ENCODE measurements at regions of chr11 and their contacts with region 1.

Region 1: GRCh38 chr11:47152953-47153950 is 23.4 kb downstream of the ARFGAP2 start:
- DNase-seq: peak; percentile 89
- H3K4me3 ChIP-seq: no peak overlapping the region
- H3K27ac ChIP-seq: no peak overlapping the region
- H3K4me1 ChIP-seq: peaks cover 0 to 29% (median 26%) of the 10 kb centered on the region in 4 donors
- H3K27me3 ChIP-seq: no peaks in the 10 kb centered on the region
- CTCF ChIP-seq: peak; percentile 92 to 98 (median 96)
- EP300 ChIP-seq: no peak
- POLR2A ChIP-seq: no peak

Region 2: GRCh38 chr11:46529095-46529905 is 624.0 kb before region 1 on chr11:
- intact Hi-C with region 1: no loop called
- DNase-seq: peak; percentile 77
- H3K4me3 ChIP-seq: no peak overlapping the region
- H3K27ac ChIP-seq: no peak overlapping the region
- H3K4me1 ChIP-seq: peaks cover 0 to 10% (median 7%) of the 10 kb centered on the region in 4 donors
- H3K27me3 ChIP-seq: no peaks in the 10 kb centered on the region
- CTCF ChIP-seq: peak in 3 of 4 experiments; percentile 74 to 86 (median 83)
- EP300 ChIP-seq: no peak
- POLR2A ChIP-seq: no peak

Region 3: DNA sequence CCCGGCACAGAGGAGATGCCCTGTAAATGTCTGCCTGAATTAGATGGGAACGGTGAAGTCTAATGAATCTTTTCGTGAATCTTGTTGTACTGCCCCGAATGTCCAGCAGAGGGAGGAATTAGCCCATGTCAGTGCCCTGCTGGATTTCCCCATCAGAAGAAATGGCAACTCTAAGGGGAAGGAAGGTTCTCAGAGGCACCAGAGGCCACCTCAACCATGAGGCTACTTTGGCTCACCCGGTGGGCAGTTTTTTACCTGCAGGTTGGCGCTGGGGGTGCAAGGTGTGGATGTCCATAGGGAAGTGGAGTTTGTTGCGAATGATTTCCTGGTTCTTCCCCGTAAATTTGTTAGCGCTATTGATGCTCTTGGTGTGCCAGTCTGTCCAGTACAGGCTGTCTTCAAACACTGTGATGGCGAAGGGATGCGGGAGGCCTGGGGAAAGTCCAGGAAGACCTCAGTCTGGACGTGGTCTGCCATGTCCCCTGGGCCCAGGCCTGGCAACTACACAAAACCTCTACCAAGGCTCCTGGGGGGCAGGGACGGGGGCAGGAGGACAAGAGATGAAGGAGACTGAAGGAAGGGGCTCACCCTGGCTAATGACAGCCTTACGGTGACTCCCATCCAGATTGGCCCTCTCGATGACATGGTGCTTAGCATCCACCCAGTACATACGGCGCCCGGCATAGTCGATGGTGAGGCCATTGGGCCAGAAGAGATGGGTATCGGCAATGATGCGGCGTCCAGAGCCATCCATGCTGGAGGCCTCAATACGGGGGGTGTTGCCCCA is 263.4 kb before region 1 on chr11:
- intact Hi-C with region 1: loop called (anchors 1 kb)
- DNase-seq: peak; percentile 81
- H3K4me3 ChIP-seq: no peak overlapping the region
- H3K27ac ChIP-seq: no peak overlapping the region
- H3K4me1 ChIP-seq: no peaks in the 10 kb centered on the region
- H3K27me3 ChIP-seq: no peaks in the 10 kb centered on the region
- CTCF ChIP-seq: peak; percentile 85 to 94 (median 90)
- EP300 ChIP-seq: no peak
- POLR2A ChIP-seq: no peak

Region 4: GRCh38 chr11:46916286-46917108 is 236.8 kb before region 1 on chr11:
- intact Hi-C with region 1: no loop called
- DNase-seq: peak; percentile 88
- H3K4me3 ChIP-seq: peak overlapping the region; percentile 47 to 76 (median 60)
- H3K27ac ChIP-seq: peak overlapping the region; percentile 67 to 84 (median 69)
- H3K4me1 ChIP-seq: peaks cover 0 to 76% (median 56%) of the 10 kb centered on the region in 4 donors
- H3K27me3 ChIP-seq: no peaks in the 10 kb centered on the region
- CTCF ChIP-seq: peak in 1 of 4 experiments; percentile 34
- EP300 ChIP-seq: no peak
- POLR2A ChIP-seq: no peak

Region 5: DNA sequence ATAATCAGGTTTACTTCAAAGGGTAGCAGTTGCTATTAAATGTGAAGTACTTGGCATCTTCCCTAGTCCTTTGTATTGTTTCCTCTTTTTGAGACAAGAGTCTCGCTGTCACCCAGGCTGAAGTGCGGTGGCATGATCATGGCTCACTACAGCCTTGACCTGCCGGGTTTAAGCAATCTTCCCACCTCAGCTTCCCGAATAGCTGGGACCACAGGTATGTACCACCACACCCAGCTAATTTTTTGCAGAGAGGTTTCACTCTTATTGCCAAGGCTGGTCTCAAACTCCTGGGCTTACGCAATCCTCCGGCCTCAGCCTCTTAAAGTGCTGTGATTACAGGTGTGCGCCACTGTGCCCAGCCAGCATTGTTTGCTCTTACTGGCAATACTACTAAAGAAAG is 331.9 kb after region 1 on chr11:
- intact Hi-C with region 1: no loop called
- DNase-seq: no peak
- H3K4me3 ChIP-seq: no peak overlapping the region
- H3K27ac ChIP-seq: no peak overlapping the region
- H3K4me1 ChIP-seq: peaks cover 0 to 21% (median 7%) of the 10 kb centered on the region in 4 donors
- H3K27me3 ChIP-seq: no peaks in the 10 kb centered on the region
- CTCF ChIP-seq: no peak
- EP300 ChIP-seq: no peak
- POLR2A ChIP-seq: no peak